CD4-positive, alpha-beta memory T cell (primary cell): ENCODE measurements at regions of chr19 and their contacts with region 1.

Region 1: DNA sequence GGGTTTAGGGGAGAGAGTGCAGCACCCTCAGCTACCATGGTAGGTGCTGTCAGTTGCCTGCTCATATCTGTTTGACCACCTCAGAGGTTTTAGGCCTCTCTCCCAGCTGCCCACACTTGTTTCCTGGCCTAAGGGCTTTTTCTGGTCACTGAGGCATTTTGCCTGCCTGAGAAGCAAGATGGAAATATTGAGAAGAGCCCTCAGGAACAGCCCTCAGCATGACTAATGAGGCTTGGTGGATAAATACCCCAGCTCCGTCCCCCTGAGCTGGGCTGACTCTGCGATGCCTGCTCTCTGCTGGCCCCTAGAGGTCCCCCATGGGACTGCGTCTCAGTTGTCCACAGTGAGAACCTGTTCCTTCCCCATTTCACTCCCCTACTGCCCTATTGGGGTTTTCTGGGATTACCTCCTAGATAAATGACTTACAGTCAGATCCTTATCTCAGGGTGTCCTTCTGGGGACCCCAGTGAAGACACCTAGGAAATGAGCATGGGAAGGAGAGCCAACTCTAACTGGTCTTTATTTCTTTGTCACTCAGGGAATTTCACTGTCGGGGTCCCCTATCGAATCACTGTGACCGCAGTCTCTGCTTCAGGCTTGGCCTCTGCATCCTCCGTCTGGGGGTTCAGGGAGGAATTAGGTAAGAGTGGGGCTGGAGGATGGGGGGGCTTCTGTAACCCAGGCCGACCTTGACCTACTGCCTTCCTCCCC is 13.3 kb downstream of the PALM3 start:
- DNase-seq: peak; percentile 63 to 73 (median 68)
- H3K4me3 ChIP-seq: no peak overlapping the region
- H3K4me3 Mint-ChIP-seq: no peak overlapping the region
- H3K27ac ChIP-seq: peak overlapping the region; percentile 39
- H3K27ac Mint-ChIP-seq: peak overlapping the region; percentile 26 to 85 (median 42)
- H3K4me1 ChIP-seq: peaks cover 5% of the 10 kb centered on the region
- H3K4me1 Mint-ChIP-seq: peaks cover 2 to 5% (median 3%) of the 10 kb centered on the region in 4 donors
- H3K27me3 ChIP-seq: no peaks in the 10 kb centered on the region
- H3K27me3 Mint-ChIP-seq: no peaks in the 10 kb centered on the region

Region 2: DNA sequence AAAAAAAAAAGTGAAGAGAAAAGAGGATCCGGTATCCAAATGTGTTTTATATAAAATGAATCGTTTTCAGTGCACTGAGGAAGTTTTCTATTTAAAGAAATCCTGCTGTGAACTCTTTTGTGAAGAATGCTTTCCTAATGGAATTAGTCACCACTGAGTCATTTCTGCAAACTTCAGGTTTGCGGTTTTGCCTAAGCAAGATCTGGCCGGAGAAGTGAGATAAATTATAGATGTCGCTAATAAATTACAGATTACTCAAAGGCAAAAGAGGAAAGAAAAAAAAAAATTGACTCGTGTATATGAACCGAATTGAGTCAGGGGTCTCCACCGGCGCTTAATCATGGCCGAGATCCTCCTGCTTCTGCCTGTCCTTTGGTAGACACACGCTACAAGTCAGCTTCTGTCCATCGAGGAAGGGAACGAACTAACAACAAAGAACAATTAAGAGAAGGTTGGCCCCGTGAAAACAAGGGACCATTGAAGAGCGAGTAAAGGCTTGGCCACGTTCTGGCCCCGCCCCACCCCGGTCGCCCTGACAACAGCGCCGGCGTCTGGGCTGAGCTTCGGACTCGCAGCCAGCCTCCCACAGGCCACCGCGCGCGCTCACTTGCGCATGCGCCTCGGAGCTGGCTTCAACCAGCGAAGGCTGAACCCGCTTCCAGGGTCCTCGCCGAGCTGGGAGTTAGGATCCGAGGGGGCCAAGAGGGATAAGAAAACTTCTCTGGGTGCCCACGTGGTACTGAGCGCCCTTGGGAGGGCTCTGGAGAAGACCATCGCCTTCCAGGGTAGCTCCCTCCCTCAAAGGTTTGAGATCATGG is 317.2 kb before region 1 on chr19:
- CTCF ChIA-PET with region 1: no interaction called
- POLR2A ChIA-PET with region 1: no interaction called
- intact Hi-C with region 1: no loop called
- DNase-seq: peak; percentile 92 to 93 (median 92)
- H3K4me3 ChIP-seq: peak overlapping the region; percentile 79 to 87
- H3K4me3 Mint-ChIP-seq: peak overlapping the region; percentile 89 to 97 (median 92)
- H3K27ac ChIP-seq: peak overlapping the region; percentile 59
- H3K27ac Mint-ChIP-seq: peak overlapping the region; percentile 73 to 97 (median 94)
- H3K4me1 ChIP-seq: peaks cover 19% of the 10 kb centered on the region
- H3K4me1 Mint-ChIP-seq: peaks cover 6 to 19% (median 10%) of the 10 kb centered on the region in 4 donors
- H3K27me3 ChIP-seq: no peaks in the 10 kb centered on the region
- H3K27me3 Mint-ChIP-seq: no peaks in the 10 kb centered on the region

Region 3: DNA sequence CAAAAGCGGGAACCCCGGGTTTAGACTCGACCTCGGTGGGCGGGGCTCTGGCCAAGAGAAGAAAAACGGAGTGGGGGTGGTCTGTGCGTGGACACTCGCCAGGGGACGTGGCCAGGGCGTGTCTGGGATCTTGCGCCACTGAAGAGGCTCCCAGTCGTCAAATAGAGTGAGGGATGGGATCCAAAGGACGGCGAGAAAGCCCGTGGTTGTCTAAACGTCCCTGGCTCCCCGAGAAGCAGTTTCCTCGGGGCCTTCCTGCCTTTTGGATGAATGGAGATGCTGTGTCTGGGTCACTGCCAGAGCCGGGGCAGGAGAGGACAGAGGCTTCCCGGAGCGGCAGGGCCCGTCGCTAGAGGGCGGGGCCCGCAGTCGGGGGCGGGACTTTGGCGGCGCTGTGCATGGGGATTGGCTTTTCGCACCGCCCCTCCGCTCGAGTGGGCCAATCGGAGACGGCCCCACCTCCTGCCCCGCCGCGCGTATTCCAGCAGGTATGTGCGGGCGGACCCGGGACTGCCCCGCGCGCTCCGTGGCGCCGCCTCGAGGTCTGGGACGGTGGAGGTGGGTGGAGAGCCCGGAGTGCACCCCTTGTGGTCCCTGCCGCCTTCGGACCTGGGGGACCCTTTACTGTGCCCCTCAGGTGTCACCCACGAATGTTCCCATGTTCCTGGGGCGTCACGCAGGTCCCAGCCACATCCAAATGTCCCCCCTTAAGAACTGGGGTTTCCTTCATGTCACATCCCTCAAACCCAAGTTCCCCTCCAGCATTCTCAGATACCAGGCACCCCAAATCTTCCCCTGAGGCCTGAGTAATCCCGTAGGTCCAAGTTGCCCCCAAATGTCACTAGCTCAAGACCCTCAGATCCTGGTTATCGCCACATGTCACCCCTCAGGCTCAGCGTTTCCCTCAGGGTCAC is 215.0 kb before region 1 on chr19:
- CTCF ChIA-PET with region 1: no interaction called
- POLR2A ChIA-PET with region 1: no interaction called
- intact Hi-C with region 1: no loop called
- DNase-seq: peak; percentile 90 to 94 (median 91)
- H3K4me3 ChIP-seq: peak overlapping the region; percentile 36 to 47
- H3K4me3 Mint-ChIP-seq: peak overlapping the region; percentile 83 to 88 (median 86)
- H3K27ac ChIP-seq: peak overlapping the region; percentile 92
- H3K27ac Mint-ChIP-seq: peak overlapping the region; percentile 96 to 100 (median 97)
- H3K4me1 ChIP-seq: peaks cover 49% of the 10 kb centered on the region
- H3K4me1 Mint-ChIP-seq: peaks cover 17 to 50% (median 30%) of the 10 kb centered on the region in 4 donors
- H3K27me3 ChIP-seq: no peaks in the 10 kb centered on the region
- H3K27me3 Mint-ChIP-seq: no peaks in the 10 kb centered on the region

Region 4: GRCh38 chr19:13905938-13906904 is 142.4 kb before region 1 on chr19 and contains the starts of genes BRME1 and CC2D1A:
- CTCF ChIA-PET with region 1: interaction called, 15 read pairs
- POLR2A ChIA-PET with region 1: interaction called, 4 read pairs
- intact Hi-C with region 1: loop called (anchors 1 kb)
- DNase-seq: peak; percentile 91 to 92 (median 92)
- H3K4me3 ChIP-seq: peak within 1 kb of the TSS; percentile 34 to 79
- H3K4me3 Mint-ChIP-seq: peak within 1 kb of the TSS; percentile 82 to 93 (median 88)
- H3K27ac ChIP-seq: peak within 1 kb of the TSS; percentile 77
- H3K27ac Mint-ChIP-seq: peak within 1 kb of the TSS; percentile 73 to 98 (median 94)
- H3K4me1 ChIP-seq: peaks cover 15% of the 10 kb centered on the region
- H3K4me1 Mint-ChIP-seq: peaks cover 10 to 21% (median 13%) of the 10 kb centered on the region in 4 donors
- H3K27me3 ChIP-seq: no peaks in the 10 kb centered on the region
- H3K27me3 Mint-ChIP-seq: no peaks in the 10 kb centered on the region
- total RNA-seq, gene BRME1: 3.1 to 3.8 TPM
- total RNA-seq, gene CC2D1A: 32.9 to 37.1 TPM

Region 5: DNA sequence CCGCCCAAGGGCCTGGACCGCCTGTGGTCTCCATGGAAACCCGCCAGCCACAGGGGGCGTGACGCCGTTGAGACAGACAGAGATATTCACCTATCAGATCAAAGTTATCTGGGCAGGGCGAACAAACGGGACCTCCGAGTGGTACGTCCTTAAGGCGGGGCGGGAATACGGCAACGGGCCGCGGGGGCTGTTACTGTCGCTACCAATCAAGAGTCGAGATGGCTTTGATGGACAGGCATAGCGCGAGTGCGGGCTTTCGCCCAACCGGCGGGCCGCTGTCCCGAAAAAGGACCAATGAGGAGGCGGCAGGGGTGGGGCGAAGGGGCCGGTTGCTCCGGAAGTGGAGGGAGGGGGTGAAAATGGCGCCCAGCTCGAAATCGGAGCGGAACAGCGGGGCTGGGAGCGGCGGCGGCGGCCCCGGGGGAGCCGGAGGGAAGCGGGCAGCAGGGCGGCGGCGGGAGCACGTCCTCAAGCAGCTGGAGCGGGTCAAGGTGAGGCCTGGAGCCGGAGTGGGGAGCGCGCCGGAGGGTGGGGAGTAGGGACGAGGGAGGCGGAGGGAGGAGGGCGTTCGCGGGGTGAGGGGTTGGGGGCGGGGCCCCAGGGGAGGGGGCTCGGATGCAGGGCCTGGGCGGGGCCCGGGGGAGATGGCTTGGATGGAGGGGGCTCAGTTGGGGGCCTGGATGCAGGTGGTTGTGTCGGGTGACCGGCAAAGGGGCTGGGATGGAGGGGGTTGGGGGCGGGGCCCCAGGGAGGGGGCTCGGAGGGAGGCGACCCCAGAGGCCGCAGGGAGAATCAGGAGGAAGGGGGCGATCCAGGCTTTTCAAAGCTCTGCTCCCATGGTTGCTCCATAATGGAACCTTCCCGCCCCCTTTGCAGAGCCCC is 96.2 kb before region 1 on chr19 and contains the start of gene DCAF15:
- CTCF ChIA-PET with region 1: interaction called, 24 read pairs
- POLR2A ChIA-PET with region 1: interaction called, 12 read pairs
- intact Hi-C with region 1: loop called (anchors 2 kb)
- DNase-seq: peak; percentile 98 to 100 (median 99)
- H3K4me3 ChIP-seq: peak within 1 kb of the TSS; percentile 43 to 71
- H3K4me3 Mint-ChIP-seq: peak within 1 kb of the TSS; percentile 88 to 96 (median 92)
- H3K27ac ChIP-seq: peak within 1 kb of the TSS; percentile 80
- H3K27ac Mint-ChIP-seq: peak within 1 kb of the TSS; percentile 86 to 99 (median 96)
- H3K4me1 ChIP-seq: peaks cover 22% of the 10 kb centered on the region
- H3K4me1 Mint-ChIP-seq: peaks cover 12 to 28% (median 17%) of the 10 kb centered on the region in 4 donors
- H3K27me3 ChIP-seq: no peaks in the 10 kb centered on the region
- H3K27me3 Mint-ChIP-seq: no peaks in the 10 kb centered on the region
- total RNA-seq, gene DCAF15: 92.9 to 96.7 TPM

Region 6: GRCh38 chr19:14023404-14024235 is 25.0 kb before region 1 on chr19:
- CTCF ChIA-PET with region 1: interaction called, 12 read pairs
- POLR2A ChIA-PET with region 1: no interaction called
- intact Hi-C with region 1: no loop called
- DNase-seq: no peak
- H3K4me3 ChIP-seq: no peak overlapping the region
- H3K4me3 Mint-ChIP-seq: no peak overlapping the region
- H3K27ac ChIP-seq: no peak overlapping the region
- H3K27ac Mint-ChIP-seq: peak overlapping the region in 3 of 7 donors; percentile 55 to 80 (median 79)
- H3K4me1 ChIP-seq: peaks cover 10% of the 10 kb centered on the region
- H3K4me1 Mint-ChIP-seq: peaks cover 3 to 18% (median 10%) of the 10 kb centered on the region in 4 donors
- H3K27me3 ChIP-seq: no peaks in the 10 kb centered on the region
- H3K27me3 Mint-ChIP-seq: no peaks in the 10 kb centered on the region

Region 7: GRCh38 chr19:14059093-14059480 is 10.5 kb after region 1 on chr19:
- CTCF ChIA-PET with region 1: interaction called, 27 read pairs
- POLR2A ChIA-PET with region 1: interaction called, 6 read pairs
- intact Hi-C with region 1: no loop called
- DNase-seq: peak in 4 of 5 donors; percentile 20 to 43 (median 42)
- H3K4me3 ChIP-seq: no peak overlapping the region
- H3K4me3 Mint-ChIP-seq: peak overlapping the region in 7 of 8 donors; percentile 42 to 84 (median 61)
- H3K27ac ChIP-seq: no peak overlapping the region
- H3K27ac Mint-ChIP-seq: peak overlapping the region in 1 of 7 donors; percentile 40
- H3K4me1 ChIP-seq: peaks cover 18% of the 10 kb centered on the region
- H3K4me1 Mint-ChIP-seq: peaks cover 9 to 28% (median 16%) of the 10 kb centered on the region in 4 donors
- H3K27me3 ChIP-seq: peaks cover 17% of the 10 kb centered on the region
- H3K27me3 Mint-ChIP-seq: peaks cover 13 to 22% of the 10 kb centered on the region in 2 donors